ENCODE measurements at regions of chr3 and their contacts with region 1.

Region 1: DNA sequence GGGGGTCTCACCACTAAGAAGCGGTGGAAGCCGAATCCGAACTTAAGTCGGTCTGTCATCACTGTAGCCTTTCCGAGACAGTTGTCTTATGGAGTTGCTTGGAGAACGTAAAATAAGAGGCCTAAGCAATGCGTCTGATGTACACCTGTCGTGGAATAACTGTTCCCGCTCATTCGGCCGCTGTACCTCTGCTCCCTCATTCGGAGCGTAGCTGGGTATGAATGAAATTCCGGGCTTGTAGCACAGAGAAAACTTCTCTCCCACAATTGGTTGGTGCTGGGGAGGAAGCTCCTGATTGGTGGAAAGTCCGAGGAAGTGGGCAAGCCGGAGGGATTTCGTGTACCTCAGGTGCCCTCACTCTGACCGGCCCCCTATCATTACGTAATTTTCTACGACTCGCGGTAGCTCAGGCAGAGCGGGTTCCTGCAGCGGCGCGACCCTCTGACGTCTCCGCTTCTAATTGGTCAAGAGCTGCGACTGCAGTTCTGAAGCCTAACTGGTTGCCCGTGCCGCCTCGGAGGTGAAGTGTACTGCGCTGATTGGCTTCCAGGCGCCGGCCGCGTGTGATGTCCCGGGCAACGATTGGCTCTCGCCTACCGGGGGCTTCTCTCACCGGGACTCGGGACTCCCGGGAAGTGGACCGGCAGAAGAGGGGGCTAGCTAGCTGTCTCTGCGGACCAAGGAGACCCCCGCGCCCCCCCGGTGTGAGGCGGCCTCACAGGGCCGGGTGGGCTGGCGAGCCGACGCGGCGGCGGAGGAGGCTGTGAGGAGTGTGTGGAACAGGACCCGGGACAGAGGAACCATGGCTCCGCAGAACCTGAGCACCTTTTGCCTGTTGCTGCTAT is at the start of gene DNAJB11:
- DNase-seq: peak; percentile 83 to 100 (median 99)
- ATAC-seq: peak; percentile 91
- H3K4me3 ChIP-seq: peak within 1 kb of the TSS; percentile 85
- H3K4me3 Mint-ChIP-seq: peak within 1 kb of the TSS; percentile 83 to 98 (median 95)
- H3K27ac ChIP-seq: peak within 1 kb of the TSS; percentile 95
- H3K27ac Mint-ChIP-seq: peak within 1 kb of the TSS; percentile 85 to 99 (median 98)
- H3K4me1 ChIP-seq: peaks cover 25 to 33% of the 10 kb centered on the region in 2 donors
- H3K4me1 Mint-ChIP-seq: peaks cover 20 to 70% (median 66%) of the 10 kb centered on the region in 7 donors
- H3K27me3 ChIP-seq: no peaks in the 10 kb centered on the region
- H3K27me3 Mint-ChIP-seq: peaks cover 0 to 4% (median 0%) of the 10 kb centered on the region in 5 donors
- total RNA-seq, gene DNAJB11: 29.9 to 75.2 (median 63.1) TPM

Region 2: DNA sequence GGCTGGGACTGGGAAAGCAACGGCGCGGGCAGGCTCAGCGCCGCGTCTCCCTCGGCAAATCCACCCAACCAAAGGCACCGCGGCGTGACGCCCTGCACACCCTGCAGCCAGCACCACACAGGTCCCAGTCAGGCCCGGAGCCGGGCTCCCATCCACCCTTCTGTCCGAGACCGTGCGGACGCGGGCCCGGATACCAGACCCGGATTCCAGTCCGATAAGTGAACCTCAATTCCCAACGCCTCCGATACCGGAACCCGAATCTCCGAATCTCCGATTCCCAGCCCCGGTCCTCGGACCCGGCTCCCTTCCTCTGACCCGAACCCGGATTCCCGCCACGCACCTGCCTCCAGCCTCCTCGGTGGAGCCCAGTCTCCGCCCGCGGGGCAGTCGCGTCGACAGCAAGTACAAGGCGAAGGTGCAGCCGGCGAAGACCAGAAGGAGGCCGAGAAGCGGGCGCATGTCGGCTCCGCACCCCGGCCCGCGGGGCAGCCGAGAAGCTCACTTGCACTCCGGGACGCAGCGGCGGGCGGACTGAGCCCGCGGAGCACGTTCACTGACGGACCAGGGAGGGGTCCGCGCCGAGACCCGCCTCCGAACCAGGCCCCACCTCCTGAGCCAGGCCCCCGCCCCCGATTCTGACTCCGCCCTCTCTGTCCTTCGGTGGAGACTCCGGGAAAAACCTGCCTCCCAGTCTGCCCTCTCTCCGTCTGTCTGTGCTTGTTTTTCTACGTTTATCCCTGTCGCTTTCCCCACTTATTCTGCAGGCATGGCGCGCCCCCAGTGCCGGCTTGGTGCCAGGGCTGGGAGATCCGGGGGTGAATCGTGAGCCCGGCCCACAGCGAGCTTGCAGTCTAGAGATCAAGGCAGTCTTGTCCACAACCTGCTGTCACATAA is 1071.6 kb before region 1 on chr3 and contains the start of gene TMEM41A:
- CTCF ChIA-PET with region 1: no interaction called
- POLR2A ChIA-PET with region 1: interaction called, 3 read pairs
- intact Hi-C with region 1: loop called in 1 of 2 experiments (anchors 5 kb)
- DNase-seq: peak; percentile 80 to 94 (median 88)
- ATAC-seq: peak; percentile 99
- H3K4me3 ChIP-seq: peak within 1 kb of the TSS; percentile 93
- H3K4me3 Mint-ChIP-seq: peak within 1 kb of the TSS; percentile 87 to 98 (median 96)
- H3K27ac ChIP-seq: peak within 1 kb of the TSS; percentile 76
- H3K27ac Mint-ChIP-seq: peak within 1 kb of the TSS; percentile 87 to 95 (median 90)
- H3K4me1 ChIP-seq: peaks cover 17 to 24% of the 10 kb centered on the region in 2 donors
- H3K4me1 Mint-ChIP-seq: peaks cover 6 to 40% (median 29%) of the 10 kb centered on the region in 7 donors
- H3K27me3 ChIP-seq: no peaks in the 10 kb centered on the region
- H3K27me3 Mint-ChIP-seq: peaks cover 0 to 10% (median 0%) of the 10 kb centered on the region in 5 donors
- total RNA-seq, gene TMEM41A: 23.7 to 30.5 (median 29.1) TPM

Region 3: DNA sequence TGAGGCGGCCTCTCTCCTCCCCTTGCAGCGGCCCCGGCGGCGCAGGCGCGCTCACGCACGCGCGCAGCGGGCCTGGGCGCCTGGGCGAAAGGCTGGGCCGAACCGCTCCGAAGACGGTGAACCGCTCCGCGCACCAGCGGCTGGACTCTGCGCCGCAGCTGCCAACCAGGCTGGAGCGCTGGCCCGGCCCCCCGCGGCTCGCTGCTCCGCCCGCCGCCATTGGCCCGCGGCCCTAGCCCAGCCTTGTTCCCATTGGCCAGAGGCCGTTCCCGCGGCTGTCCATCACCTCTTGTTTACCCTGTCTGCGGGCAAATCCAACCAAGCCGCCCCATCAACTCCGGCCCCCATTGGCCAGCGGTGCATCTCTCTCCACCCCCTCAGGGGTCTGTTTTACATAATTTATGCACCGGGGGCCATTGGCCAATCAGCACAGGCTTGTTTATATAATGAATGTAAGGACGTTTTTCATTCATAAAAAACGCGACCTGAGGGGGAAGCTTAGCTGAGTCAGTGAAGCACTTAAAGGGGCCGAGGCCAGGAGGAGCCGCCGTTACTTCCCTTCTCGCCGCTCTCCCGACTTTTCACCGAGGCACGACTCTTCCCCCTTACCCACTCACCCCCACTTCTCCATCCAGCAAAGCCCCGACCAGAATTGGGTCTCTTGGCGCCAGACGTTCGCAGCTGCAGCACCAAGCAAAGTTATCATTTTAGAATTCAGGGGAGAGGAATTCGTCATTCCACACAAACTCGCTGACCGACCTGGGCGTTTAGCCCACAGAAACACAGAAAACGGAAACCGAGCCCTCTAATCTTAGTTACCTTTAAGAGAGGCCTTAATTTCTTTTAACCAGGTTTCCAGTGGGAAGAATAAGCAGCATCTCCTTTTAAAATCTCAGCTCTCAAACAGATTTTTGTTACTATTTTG is 461.1 kb before region 1 on chr3 and contains the start of gene ETV5:
- CTCF ChIA-PET with region 1: no interaction called
- POLR2A ChIA-PET with region 1: no interaction called
- intact Hi-C with region 1: loop called (anchors 5 to 10 kb)
- DNase-seq: peak; percentile 65 to 91 (median 79)
- ATAC-seq: peak; percentile 97
- H3K4me3 ChIP-seq: peak within 1 kb of the TSS; percentile 71
- H3K4me3 Mint-ChIP-seq: peak within 1 kb of the TSS; percentile 86 to 97 (median 90)
- H3K27ac ChIP-seq: no peak within 1 kb of the TSS
- H3K27ac Mint-ChIP-seq: peak within 1 kb of the TSS in 5 of 9 donors; percentile 7 to 90 (median 60)
- H3K4me1 ChIP-seq: peaks cover 23 to 35% of the 10 kb centered on the region in 2 donors
- H3K4me1 Mint-ChIP-seq: peaks cover 34 to 38% (median 38%) of the 10 kb centered on the region in 7 donors
- H3K27me3 ChIP-seq: peaks cover 22 to 54% of the 10 kb centered on the region in 2 donors
- H3K27me3 Mint-ChIP-seq: peaks cover 84 to 87% (median 86%) of the 10 kb centered on the region in 5 donors
- total RNA-seq, gene ETV5: 0.56 to 2.3 (median 0.97) TPM in 4 of 5 experiments, not detected in the other

Region 4: GRCh38 chr3:186605561-186606545 is 35.5 kb after region 1 on chr3:
- CTCF ChIA-PET with region 1: no interaction called
- POLR2A ChIA-PET with region 1: no interaction called
- intact Hi-C with region 1: no loop called
- DNase-seq: no peak
- ATAC-seq: no peak
- H3K4me3 ChIP-seq: no peak overlapping the region
- H3K4me3 Mint-ChIP-seq: no peak overlapping the region
- H3K27ac ChIP-seq: no peak overlapping the region
- H3K27ac Mint-ChIP-seq: no peak overlapping the region
- H3K4me1 ChIP-seq: no peaks in the 10 kb centered on the region
- H3K4me1 Mint-ChIP-seq: no peaks in the 10 kb centered on the region
- H3K27me3 ChIP-seq: no peaks in the 10 kb centered on the region
- H3K27me3 Mint-ChIP-seq: peaks cover 0 to 9% (median 0%) of the 10 kb centered on the region in 5 donors

Region 5: GRCh38 chr3:186653080-186653707 is 82.9 kb after region 1 on chr3:
- CTCF ChIA-PET with region 1: no interaction called
- POLR2A ChIA-PET with region 1: no interaction called
- intact Hi-C with region 1: no loop called
- DNase-seq: no peak
- ATAC-seq: no peak
- H3K4me3 ChIP-seq: no peak overlapping the region
- H3K4me3 Mint-ChIP-seq: no peak overlapping the region
- H3K27ac ChIP-seq: no peak overlapping the region
- H3K27ac Mint-ChIP-seq: no peak overlapping the region
- H3K4me1 ChIP-seq: no peaks in the 10 kb centered on the region
- H3K4me1 Mint-ChIP-seq: no peaks in the 10 kb centered on the region
- H3K27me3 ChIP-seq: no peaks in the 10 kb centered on the region
- H3K27me3 Mint-ChIP-seq: peaks cover 0 to 22% (median 11%) of the 10 kb centered on the region in 5 donors

Region 6: GRCh38 chr3:186806089-186807055 is 236.1 kb after region 1 on chr3 and contains the start of gene RFC4:
- CTCF ChIA-PET with region 1: no interaction called
- POLR2A ChIA-PET with region 1: interaction called, 3 read pairs
- intact Hi-C with region 1: loop called (anchors 1 kb)
- DNase-seq: peak; percentile 66 to 86 (median 82)
- ATAC-seq: peak; percentile 91
- H3K4me3 ChIP-seq: peak within 1 kb of the TSS; percentile 95
- H3K4me3 Mint-ChIP-seq: peak within 1 kb of the TSS; percentile 89 to 97 (median 94)
- H3K27ac ChIP-seq: peak within 1 kb of the TSS; percentile 86
- H3K27ac Mint-ChIP-seq: peak within 1 kb of the TSS; percentile 84 to 97 (median 95)
- H3K4me1 ChIP-seq: peaks cover 17 to 21% of the 10 kb centered on the region in 2 donors
- H3K4me1 Mint-ChIP-seq: peaks cover 5 to 38% (median 18%) of the 10 kb centered on the region in 7 donors
- H3K27me3 ChIP-seq: no peaks in the 10 kb centered on the region
- H3K27me3 Mint-ChIP-seq: no peaks in the 10 kb centered on the region
- total RNA-seq, gene RFC4: 8.7 to 71.6 (median 22.1) TPM

Region 7: GRCh38 chr3:187130346-187131066 is 560.2 kb after region 1 on chr3:
- CTCF ChIA-PET with region 1: no interaction called
- POLR2A ChIA-PET with region 1: interaction called, 3 read pairs
- intact Hi-C with region 1: loop called (anchors 1 to 5 kb)
- DNase-seq: peak in 7 of 9 donors; percentile 61 to 86 (median 81)
- ATAC-seq: peak; percentile 99
- H3K4me3 ChIP-seq: no peak overlapping the region
- H3K4me3 Mint-ChIP-seq: peak overlapping the region; percentile 43 to 86 (median 74)
- H3K27ac ChIP-seq: peak overlapping the region; percentile 68
- H3K27ac Mint-ChIP-seq: peak overlapping the region; percentile 95 to 99 (median 97)
- H3K4me1 ChIP-seq: peaks cover 19 to 22% of the 10 kb centered on the region in 2 donors
- H3K4me1 Mint-ChIP-seq: peaks cover 12 to 49% (median 25%) of the 10 kb centered on the region in 7 donors
- H3K27me3 ChIP-seq: no peaks in the 10 kb centered on the region
- H3K27me3 Mint-ChIP-seq: no peaks in the 10 kb centered on the region

Region 8: GRCh38 chr3:187368251-187369088 is 798.2 kb after region 1 on chr3 and contains the start of gene RTP4:
- CTCF ChIA-PET with region 1: no interaction called
- POLR2A ChIA-PET with region 1: no interaction called
- intact Hi-C with region 1: loop called in 1 of 2 experiments (anchors 5 kb)
- DNase-seq: peak in 8 of 9 donors; percentile 25 to 70 (median 55)
- ATAC-seq: peak; percentile 86
- H3K4me3 ChIP-seq: peak within 1 kb of the TSS; percentile 85
- H3K4me3 Mint-ChIP-seq: peak within 1 kb of the TSS; percentile 89 to 100 (median 98)
- H3K27ac ChIP-seq: peak within 1 kb of the TSS; percentile 78
- H3K27ac Mint-ChIP-seq: peak within 1 kb of the TSS; percentile 94 to 100 (median 98)
- H3K4me1 ChIP-seq: peaks cover 9 to 13% of the 10 kb centered on the region in 2 donors
- H3K4me1 Mint-ChIP-seq: peaks cover 22 to 42% (median 29%) of the 10 kb centered on the region in 7 donors
- H3K27me3 ChIP-seq: no peaks in the 10 kb centered on the region
- H3K27me3 Mint-ChIP-seq: no peaks in the 10 kb centered on the region
- total RNA-seq, gene RTP4: 1.6 to 23.1 (median 5.5) TPM

Measured in naive thymus-derived CD4-positive, alpha-beta T cell (primary cell).